Activated CD4-positive, alpha-beta memory T cell treated with anti-CD3 and anti-CD28 coated beads for 36 hours (primary cell): ENCODE measurements at regions of chr9 and their contacts with region 1.

Region 1: GRCh38 chr9:70563431-70564204 is 149.2 kb upstream of the KLF9 start:
- DNase-seq: peak; percentile 81
- H3K4me3 Mint-ChIP-seq: peak overlapping the region; percentile 38
- H3K27ac Mint-ChIP-seq: peak overlapping the region; percentile 88
- H3K4me1 Mint-ChIP-seq: peaks cover 47% of the 10 kb centered on the region
- H3K27me3 Mint-ChIP-seq: no peaks in the 10 kb centered on the region

Region 2: DNA sequence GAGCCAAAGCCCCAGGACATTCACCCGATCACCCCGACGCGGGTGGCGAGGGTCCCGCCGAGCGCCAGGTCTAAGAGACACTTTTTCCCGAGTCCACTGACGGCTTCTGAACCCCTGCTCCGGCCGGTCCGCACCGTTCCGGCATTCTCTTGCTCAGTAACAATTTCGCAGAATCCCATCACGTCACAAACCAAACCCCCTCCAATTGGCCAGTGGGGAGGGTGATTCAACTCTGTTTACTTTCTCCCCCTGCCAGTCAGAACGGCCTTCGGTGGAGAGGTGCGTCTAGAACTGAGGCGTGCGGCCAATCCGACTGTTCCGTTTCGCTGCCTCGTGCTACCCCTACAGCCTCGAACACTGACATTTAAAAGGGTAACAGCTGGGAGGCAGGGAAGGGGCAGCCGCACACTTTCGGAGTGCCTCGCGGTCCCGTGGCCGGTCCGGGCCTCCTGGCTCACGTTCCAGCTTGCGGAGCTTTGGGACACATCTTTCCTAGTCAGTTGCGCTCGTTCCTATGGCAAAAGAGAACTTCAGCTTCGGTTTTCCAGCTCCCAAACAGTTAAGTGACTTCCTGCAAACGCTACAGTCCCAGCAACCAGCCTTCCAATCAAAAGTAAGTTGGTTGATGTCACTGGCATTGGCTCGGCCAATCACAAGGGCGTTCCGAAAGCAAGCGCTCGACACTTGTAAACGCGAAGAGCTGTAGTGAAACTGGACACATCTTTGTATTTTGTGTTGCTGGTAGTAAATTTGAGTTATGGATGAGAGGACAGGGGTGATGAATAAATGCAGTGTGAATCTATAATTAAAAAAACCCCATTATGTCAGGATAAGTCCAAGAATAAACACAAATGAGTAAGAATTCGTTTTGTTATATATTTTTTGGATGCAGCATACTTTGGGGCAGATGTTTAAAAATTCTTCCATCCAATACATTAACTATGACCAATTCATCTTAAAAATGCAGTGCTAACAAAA is 149.5 kb before region 1 on chr9 and contains the start of gene KLF9:
- CTCF ChIA-PET with region 1: no interaction called
- POLR2A ChIA-PET with region 1: interaction called, 34 read pairs
- intact Hi-C with region 1: loop called (anchors 1 kb)
- DNase-seq: peak; percentile 96
- H3K4me3 Mint-ChIP-seq: peak within 1 kb of the TSS; percentile 97
- H3K27ac Mint-ChIP-seq: peak within 1 kb of the TSS; percentile 100
- H3K4me1 Mint-ChIP-seq: peaks cover 37% of the 10 kb centered on the region
- H3K27me3 Mint-ChIP-seq: peaks cover 2% of the 10 kb centered on the region
- total RNA-seq, gene KLF9: 23.7 to 24.5 TPM

Region 3: GRCh38 chr9:70439991-70440706 is 123.5 kb before region 1 on chr9:
- CTCF ChIA-PET with region 1: no interaction called
- POLR2A ChIA-PET with region 1: no interaction called
- intact Hi-C with region 1: no loop called
- DNase-seq: no peak
- H3K4me3 Mint-ChIP-seq: no peak overlapping the region
- H3K27ac Mint-ChIP-seq: no peak overlapping the region
- H3K4me1 Mint-ChIP-seq: peaks cover 10% of the 10 kb centered on the region
- H3K27me3 Mint-ChIP-seq: no peaks in the 10 kb centered on the region

Region 4: GRCh38 chr9:70466976-70467561 is 96.5 kb before region 1 on chr9:
- CTCF ChIA-PET with region 1: interaction called, 3 read pairs
- POLR2A ChIA-PET with region 1: no interaction called
- intact Hi-C with region 1: loop called (anchors 1 kb)
- DNase-seq: peak; percentile 72
- H3K4me3 Mint-ChIP-seq: peak overlapping the region; percentile 10
- H3K27ac Mint-ChIP-seq: peak overlapping the region; percentile 91
- H3K4me1 Mint-ChIP-seq: peaks cover 56% of the 10 kb centered on the region
- H3K27me3 Mint-ChIP-seq: no peaks in the 10 kb centered on the region

Region 5: GRCh38 chr9:70525519-70525918 is 38.1 kb before region 1 on chr9:
- CTCF ChIA-PET with region 1: no interaction called
- POLR2A ChIA-PET with region 1: interaction called, 17 read pairs
- intact Hi-C with region 1: loop called (anchors 1 kb)
- DNase-seq: no peak
- H3K4me3 Mint-ChIP-seq: no peak overlapping the region
- H3K27ac Mint-ChIP-seq: peak overlapping the region; percentile 46
- H3K4me1 Mint-ChIP-seq: peaks cover 29% of the 10 kb centered on the region
- H3K27me3 Mint-ChIP-seq: peaks cover 1% of the 10 kb centered on the region